Left ventricle myocardium inferior (tissue), 1 donor: ENCODE measurements at regions of chr7 and their contacts with region 1.

Region 1: DNA sequence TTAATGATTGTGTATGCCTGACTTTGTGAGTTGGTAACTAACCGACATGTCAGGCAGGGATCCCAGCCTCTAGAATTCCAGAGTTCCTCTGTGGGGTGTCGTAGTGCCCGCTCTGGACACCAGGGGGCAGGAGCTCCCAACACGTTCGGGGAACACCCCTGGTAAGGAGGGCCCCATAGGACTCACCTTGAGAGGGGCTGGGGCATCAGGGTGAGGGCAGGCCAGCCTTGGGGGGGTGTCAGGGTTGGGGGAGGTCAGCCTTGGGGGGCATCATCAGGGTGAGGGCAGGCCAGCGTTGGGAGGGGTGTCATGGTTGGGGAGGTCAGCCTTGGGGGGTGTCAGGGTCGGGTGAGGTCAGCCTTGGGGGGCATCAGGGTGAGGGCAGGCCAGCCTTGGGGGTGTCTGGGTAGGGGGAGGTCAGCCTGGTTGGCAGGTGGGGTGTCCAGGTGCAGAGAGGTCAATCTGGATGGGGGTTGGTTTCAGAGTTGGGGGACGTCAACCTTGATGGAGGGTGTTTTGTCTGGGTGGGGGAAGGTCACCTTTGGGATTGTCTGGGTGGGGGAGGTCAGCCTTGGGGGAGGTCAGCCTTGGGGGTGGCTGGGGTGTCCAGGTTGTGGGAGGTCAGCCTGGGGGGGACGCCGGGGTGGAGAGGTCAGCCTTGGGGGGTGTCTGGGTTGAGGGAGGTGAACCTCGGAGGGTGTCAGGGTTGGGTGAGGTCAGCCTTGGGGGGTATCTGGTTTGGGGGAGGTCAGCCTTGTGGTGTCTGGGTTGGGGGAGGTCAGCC is 45.6 kb upstream of the SUN1 start:
- DNase-seq: peak; percentile 74
- H3K4me3 ChIP-seq: no peak overlapping the region
- H3K27ac ChIP-seq: no peak overlapping the region
- H3K4me1 ChIP-seq: peaks cover 8% of the 10 kb centered on the region
- H3K27me3 ChIP-seq: no peaks in the 10 kb centered on the region
- CTCF ChIP-seq: peak; percentile 80

Region 2: DNA sequence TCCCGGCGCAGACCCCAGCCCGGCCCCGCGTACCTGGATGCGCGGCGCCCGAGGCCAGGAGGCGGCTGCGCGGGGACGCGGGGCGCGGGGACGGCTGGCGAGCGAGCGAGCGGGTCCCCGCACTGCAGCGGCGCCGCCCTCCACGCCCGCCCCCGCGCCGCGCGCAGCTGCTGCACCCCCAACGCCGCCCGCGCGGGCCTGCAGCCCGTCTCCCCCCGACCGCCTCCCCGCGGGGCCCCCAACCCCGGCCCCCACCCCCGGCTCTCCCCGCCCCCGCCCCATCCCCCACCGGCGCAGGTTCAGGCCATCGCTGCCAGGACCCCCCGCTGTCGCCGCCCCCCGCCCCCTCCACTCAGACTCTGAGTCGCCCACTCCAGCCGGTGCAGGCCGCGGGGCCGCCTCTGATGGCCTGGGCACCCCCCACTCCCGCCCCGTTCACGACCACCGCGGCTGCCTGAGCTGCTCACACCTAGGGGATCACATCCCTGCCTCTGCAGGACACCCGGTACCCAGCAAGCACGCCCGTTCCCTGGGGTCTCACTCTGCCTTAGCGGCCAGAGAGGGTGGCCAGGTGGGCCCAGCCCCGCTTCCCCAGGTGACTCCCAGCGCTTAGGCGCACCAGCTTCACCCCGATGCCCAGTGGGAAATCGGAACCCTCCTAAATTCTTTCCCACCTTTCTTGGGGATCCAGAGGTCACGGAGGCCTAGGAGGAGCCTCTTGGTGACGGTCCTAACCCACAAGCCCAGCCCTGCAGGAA is 74.1 kb before region 1 on chr7:
- intact Hi-C with region 1: no loop called
- DNase-seq: no peak
- H3K4me3 ChIP-seq: peak overlapping the region; percentile 73
- H3K27ac ChIP-seq: no peak overlapping the region
- H3K4me1 ChIP-seq: peaks cover 13% of the 10 kb centered on the region
- H3K27me3 ChIP-seq: peaks cover 3% of the 10 kb centered on the region
- CTCF ChIP-seq: no peak

Region 3: GRCh38 chr7:831596-832166 is 45.0 kb after region 1 on chr7:
- intact Hi-C with region 1: loop called (anchors 10 kb)
- DNase-seq: no peak
- H3K4me3 ChIP-seq: peak overlapping the region; percentile 52
- H3K27ac ChIP-seq: peak overlapping the region; percentile 95
- H3K4me1 ChIP-seq: peaks cover 98% of the 10 kb centered on the region
- H3K27me3 ChIP-seq: no peaks in the 10 kb centered on the region
- CTCF ChIP-seq: no peak

Region 4: GRCh38 chr7:873367-874002 is 86.8 kb after region 1 on chr7:
- intact Hi-C with region 1: loop called (anchors 5 kb)
- DNase-seq: peak; percentile 80
- H3K4me3 ChIP-seq: no peak overlapping the region
- H3K27ac ChIP-seq: peak overlapping the region; percentile 95
- H3K4me1 ChIP-seq: peaks cover 68% of the 10 kb centered on the region
- H3K27me3 ChIP-seq: no peaks in the 10 kb centered on the region
- CTCF ChIP-seq: peak; percentile 96